ENCODE measurements at regions of chr16 and their contacts with region 1.

Region 1: GRCh38 chr16:70770626-70771552 is 30.1 kb downstream of the VAC14 start:
- DNase-seq: peak; percentile 39 to 80 (median 59)
- ATAC-seq: peak; percentile 93
- H3K4me3 ChIP-seq: no peak overlapping the region
- H3K4me3 Mint-ChIP-seq: no peak overlapping the region
- H3K27ac ChIP-seq: no peak overlapping the region
- H3K27ac Mint-ChIP-seq: no peak overlapping the region
- H3K4me1 ChIP-seq: no peaks in the 10 kb centered on the region
- H3K4me1 Mint-ChIP-seq: no peaks in the 10 kb centered on the region
- H3K27me3 ChIP-seq: no peaks in the 10 kb centered on the region
- H3K27me3 Mint-ChIP-seq: no peaks in the 10 kb centered on the region
- CTCF ChIP-seq: peak; percentile 95

Region 2: DNA sequence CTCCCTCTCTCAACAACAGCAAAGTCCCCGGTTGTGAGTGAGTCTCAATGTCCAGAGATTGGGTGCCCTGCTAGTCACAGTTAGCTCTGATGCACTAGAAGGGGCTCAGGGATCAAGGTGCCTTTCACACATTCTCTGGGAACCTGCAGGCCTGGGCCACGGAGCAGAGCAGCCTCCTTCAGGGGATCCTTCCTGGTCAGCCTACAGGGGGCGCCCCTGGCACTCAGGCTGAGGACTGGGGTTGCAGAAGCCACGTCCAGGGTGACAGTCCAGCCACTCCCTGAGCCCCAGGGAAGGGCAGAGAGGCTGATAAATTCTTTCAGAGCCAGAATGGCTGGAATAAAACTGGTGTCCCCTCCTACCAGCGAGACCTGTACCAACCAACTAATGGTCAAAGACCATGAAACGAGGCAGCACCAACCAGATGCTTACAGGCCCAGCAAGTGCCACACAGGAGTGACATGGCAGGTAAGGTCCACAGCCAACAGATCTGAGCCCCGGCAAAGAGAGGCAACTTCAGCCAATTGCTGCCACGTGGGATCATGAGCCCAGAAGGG is 375.5 kb before region 1 on chr16:
- CTCF ChIA-PET with region 1: no interaction called
- POLR2A ChIA-PET with region 1: no interaction called
- intact Hi-C with region 1: no loop called
- DNase-seq: peak; percentile 21 to 76 (median 58)
- ATAC-seq: peak; percentile 70
- H3K4me3 ChIP-seq: no peak overlapping the region
- H3K4me3 Mint-ChIP-seq: no peak overlapping the region
- H3K27ac ChIP-seq: no peak overlapping the region
- H3K27ac Mint-ChIP-seq: no peak overlapping the region
- H3K4me1 ChIP-seq: no peaks in the 10 kb centered on the region
- H3K4me1 Mint-ChIP-seq: peaks cover 5% of the 10 kb centered on the region
- H3K27me3 ChIP-seq: no peaks in the 10 kb centered on the region
- H3K27me3 Mint-ChIP-seq: no peaks in the 10 kb centered on the region
- CTCF ChIP-seq: peak; percentile 48

Region 3: DNA sequence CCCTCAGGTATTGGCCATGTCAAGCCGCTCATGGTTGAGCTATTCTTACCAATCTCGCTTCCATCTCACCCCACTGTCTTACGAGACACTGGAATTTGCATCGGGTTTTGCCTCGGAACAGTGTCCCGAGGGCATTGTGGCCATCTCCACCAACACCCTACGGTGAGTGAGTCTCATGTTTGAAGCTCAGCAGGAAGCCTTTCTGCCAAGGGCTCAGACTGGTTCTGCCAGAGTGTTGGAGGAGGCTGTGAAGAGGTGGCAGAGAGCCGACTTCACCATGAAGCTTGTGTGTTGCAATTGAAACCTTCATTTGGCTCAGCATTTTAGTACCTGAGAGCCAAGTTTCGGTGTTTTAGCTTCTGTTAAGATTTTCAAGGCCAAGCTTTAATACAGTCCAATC is 209.3 kb before region 1 on chr16:
- CTCF ChIA-PET with region 1: interaction called, 5 read pairs
- POLR2A ChIA-PET with region 1: no interaction called
- intact Hi-C with region 1: loop called in 1 of 2 experiments (anchors 10 kb)
- DNase-seq: no peak
- ATAC-seq: no peak
- H3K4me3 ChIP-seq: no peak overlapping the region
- H3K4me3 Mint-ChIP-seq: no peak overlapping the region
- H3K27ac ChIP-seq: no peak overlapping the region
- H3K27ac Mint-ChIP-seq: no peak overlapping the region
- H3K4me1 ChIP-seq: no peaks in the 10 kb centered on the region
- H3K4me1 Mint-ChIP-seq: no peaks in the 10 kb centered on the region
- H3K27me3 ChIP-seq: no peaks in the 10 kb centered on the region
- H3K27me3 Mint-ChIP-seq: no peaks in the 10 kb centered on the region
- CTCF ChIP-seq: no peak

Region 4: DNA sequence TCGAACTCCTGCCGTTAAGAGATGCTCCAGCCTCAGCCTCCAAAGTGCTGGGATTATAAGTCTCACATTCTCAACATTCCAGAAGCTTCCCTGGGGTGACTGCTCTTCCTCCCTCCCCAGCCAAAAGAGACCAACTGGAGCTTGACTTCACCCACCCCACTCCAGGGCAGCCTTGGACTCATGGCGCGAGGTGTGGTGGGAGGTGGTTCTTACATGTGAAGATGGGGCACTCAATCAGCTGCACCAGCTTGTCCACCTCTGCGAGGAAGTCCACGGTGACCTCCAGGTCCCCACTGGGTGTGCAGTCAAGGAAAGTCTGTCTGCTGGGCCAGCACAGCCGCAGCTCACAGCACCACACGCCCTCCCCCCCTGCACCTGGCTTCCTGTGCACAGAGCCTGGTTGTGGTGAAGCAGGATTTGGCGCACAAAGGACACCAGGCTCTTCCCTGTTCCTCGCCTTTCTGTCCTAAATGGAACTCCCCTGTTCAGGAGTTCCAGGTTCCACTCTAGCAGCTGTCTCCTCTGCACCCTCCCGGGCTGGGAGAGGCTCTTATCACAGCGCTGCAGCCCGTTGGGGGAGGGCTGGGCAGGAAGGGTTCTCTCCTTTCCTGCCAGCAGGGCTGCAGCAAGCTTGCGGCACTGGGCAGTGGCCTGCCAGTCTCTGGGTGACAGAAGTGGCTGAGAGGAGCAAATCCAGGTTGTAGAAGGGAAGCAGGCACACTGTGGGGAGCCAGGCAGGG is 75.4 kb before region 1 on chr16:
- CTCF ChIA-PET with region 1: interaction called, 12 read pairs
- POLR2A ChIA-PET with region 1: no interaction called
- intact Hi-C with region 1: loop called in 1 of 2 experiments (anchors 5 kb)
- DNase-seq: peak in 7 of 9 experiments; percentile 1 to 72 (median 29)
- ATAC-seq: peak; percentile 10
- H3K4me3 ChIP-seq: no peak overlapping the region
- H3K4me3 Mint-ChIP-seq: peak overlapping the region; percentile 44
- H3K27ac ChIP-seq: no peak overlapping the region
- H3K27ac Mint-ChIP-seq: peak overlapping the region; percentile 91
- H3K4me1 ChIP-seq: peaks cover 38% of the 10 kb centered on the region
- H3K4me1 Mint-ChIP-seq: peaks cover 31% of the 10 kb centered on the region
- H3K27me3 ChIP-seq: no peaks in the 10 kb centered on the region
- H3K27me3 Mint-ChIP-seq: no peaks in the 10 kb centered on the region
- CTCF ChIP-seq: no peak

Region 5: GRCh38 chr16:70746708-70747424 is 24.0 kb before region 1 on chr16:
- CTCF ChIA-PET with region 1: interaction called, 13 read pairs
- POLR2A ChIA-PET with region 1: no interaction called
- intact Hi-C with region 1: no loop called
- DNase-seq: peak in 5 of 9 experiments; percentile 22 to 71 (median 33)
- ATAC-seq: peak; percentile 84
- H3K4me3 ChIP-seq: no peak overlapping the region
- H3K4me3 Mint-ChIP-seq: no peak overlapping the region
- H3K27ac ChIP-seq: peak overlapping the region; percentile 7 to 8
- H3K27ac Mint-ChIP-seq: peak overlapping the region; percentile 89
- H3K4me1 ChIP-seq: peaks cover 24% of the 10 kb centered on the region
- H3K4me1 Mint-ChIP-seq: peaks cover 38% of the 10 kb centered on the region
- H3K27me3 ChIP-seq: no peaks in the 10 kb centered on the region
- H3K27me3 Mint-ChIP-seq: no peaks in the 10 kb centered on the region
- CTCF ChIP-seq: no peak

Region 6: DNA sequence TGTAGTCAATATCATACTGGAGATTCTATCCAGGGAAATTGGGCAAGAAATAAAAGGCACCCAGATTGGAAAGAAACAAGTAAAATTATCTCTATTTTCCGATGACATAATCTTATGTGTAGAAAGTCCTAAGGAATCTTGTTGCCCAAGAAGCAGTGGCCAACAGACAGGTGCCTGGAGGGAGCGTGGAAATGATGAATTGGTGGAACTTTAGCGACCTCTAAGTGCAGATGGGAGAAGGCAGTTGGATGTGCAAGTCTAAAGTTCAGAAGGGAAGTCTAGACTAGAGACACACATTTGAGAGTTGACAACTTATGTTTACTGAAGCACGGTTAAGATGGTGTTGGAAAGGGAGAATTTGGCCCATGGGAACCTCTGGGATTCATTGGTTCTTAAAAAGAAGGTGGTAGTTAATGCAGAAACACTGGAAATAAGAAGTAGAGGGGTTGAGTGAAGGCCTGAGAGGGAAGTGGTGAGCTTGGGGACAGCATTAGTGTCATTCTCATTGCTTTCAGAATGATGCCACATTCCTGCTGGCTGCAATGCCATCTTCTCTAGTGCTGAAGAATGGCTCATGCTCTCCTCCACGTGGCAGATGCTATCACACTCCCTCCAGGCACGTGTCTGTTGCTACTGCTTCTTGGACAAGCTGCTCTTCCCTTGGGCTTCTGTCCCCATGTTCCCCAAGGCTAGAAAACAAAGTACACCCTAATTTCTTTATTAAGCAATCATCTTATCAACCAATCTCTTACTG is 782.0 kb after region 1 on chr16:
- CTCF ChIA-PET with region 1: no interaction called
- POLR2A ChIA-PET with region 1: no interaction called
- intact Hi-C with region 1: no loop called
- DNase-seq: no peak
- ATAC-seq: no peak
- H3K4me3 ChIP-seq: no peak overlapping the region
- H3K4me3 Mint-ChIP-seq: no peak overlapping the region
- H3K27ac ChIP-seq: no peak overlapping the region
- H3K27ac Mint-ChIP-seq: no peak overlapping the region
- H3K4me1 ChIP-seq: no peaks in the 10 kb centered on the region
- H3K4me1 Mint-ChIP-seq: no peaks in the 10 kb centered on the region
- H3K27me3 ChIP-seq: no peaks in the 10 kb centered on the region
- H3K27me3 Mint-ChIP-seq: peaks cover 14% of the 10 kb centered on the region
- CTCF ChIP-seq: no peak

Measured in CD8-positive, alpha-beta T cell (primary cell).